Heart left ventricle (tissue), 16 donors: ENCODE measurements at regions of chr10 and their contacts with region 1.

Region 1: DNA sequence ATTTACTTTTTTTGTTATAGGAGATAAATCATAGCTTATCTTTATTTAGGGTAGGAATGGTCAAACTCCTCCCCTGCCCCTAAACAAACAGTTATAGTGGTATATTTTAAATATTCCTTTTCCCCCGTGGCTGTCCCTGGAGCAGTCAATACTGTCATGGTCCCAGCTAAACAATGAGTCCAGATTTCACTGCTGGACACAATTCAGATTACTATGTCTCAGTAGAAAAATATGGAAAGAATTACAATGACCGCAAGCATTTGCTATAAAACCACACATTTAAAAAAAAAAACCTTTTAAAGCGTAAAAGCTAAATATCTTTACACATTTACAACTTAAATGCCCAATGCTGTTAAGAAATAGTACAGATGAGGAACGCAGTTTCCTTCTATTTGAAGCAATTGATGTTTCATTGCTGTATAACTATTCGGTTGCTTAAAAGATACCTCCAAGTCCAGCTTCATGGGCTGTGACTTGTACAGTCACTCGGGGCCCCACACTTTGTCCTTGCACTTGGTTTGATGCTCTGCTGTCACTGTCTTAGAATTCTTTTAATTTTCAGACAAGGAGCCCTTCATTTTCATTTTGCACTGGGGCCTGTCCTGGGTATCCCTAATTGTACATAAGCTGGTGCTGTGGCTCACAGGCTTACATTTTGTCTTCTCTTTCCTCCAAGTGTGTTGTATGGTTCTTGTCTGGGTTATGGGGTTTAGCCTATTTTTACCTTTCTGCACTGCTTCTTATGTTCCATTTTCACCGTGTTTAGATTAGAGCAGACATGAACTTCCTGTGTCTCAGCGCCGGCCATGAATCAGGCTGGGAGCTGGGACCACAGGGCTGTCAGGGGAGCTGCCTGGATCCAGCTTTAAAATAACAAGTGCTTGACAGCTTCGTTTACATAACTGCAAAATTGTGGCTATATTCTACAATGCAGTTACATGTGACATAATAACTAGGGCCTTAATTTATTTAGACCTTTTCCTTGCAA is 530.2 kb upstream of the FZD8 start:
- DNase-seq: peak in 3 of 5 donors; percentile 26 to 61 (median 52)
- ATAC-seq: peak in 2 of 4 donors; percentile 64 to 89
- H3K4me3 ChIP-seq: no peak overlapping the region
- H3K27ac ChIP-seq: peak overlapping the region in 10 of 12 donors; percentile 2 to 55 (median 30)
- H3K4me1 ChIP-seq: peaks cover 0 to 31% (median 16%) of the 10 kb centered on the region in 12 donors
- H3K27me3 ChIP-seq: no peaks in the 10 kb centered on the region
- CTCF ChIP-seq: no peak
- POLR2A ChIP-seq: no peak

Region 2: GRCh38 chr10:35940141-35941041 is 231.9 kb before region 1 on chr10:
- intact Hi-C with region 1: loop called in 1 of 10 experiments (anchors 10 kb)
- DNase-seq: peak in 1 of 5 donors; percentile 28
- ATAC-seq: peak; percentile 58 to 84 (median 72)
- H3K4me3 ChIP-seq: no peak overlapping the region
- H3K27ac ChIP-seq: peak overlapping the region in 10 of 12 donors; percentile 3 to 71 (median 50)
- H3K4me1 ChIP-seq: peaks cover 0 to 16% (median 2%) of the 10 kb centered on the region in 12 donors
- H3K27me3 ChIP-seq: no peaks in the 10 kb centered on the region
- CTCF ChIP-seq: no peak
- POLR2A ChIP-seq: no peak

Region 3: DNA sequence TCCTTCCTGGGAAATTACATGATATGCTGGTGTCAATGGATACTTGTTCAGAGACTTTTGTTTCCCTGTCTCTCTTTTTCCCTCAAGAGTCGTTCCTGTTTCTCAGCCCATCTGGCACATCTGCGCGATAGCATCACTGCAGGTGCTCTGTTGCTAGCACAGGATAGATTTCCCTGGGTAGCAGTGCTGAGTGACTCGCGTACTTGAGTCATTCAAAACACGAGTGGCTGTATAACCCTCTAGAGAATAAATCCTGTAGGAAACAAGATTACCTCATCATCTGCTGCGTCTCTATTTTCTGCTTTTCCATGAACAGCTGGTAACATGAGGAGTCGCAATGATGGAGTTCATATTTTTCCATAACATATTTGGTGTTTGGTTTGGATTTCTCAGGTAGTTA is 78.2 kb before region 1 on chr10:
- intact Hi-C with region 1: loop called in 1 of 10 experiments (anchors 10 kb)
- DNase-seq: peak in 1 of 5 donors; percentile 19
- ATAC-seq: peak in 2 of 4 donors; percentile 71 to 86
- H3K4me3 ChIP-seq: no peak overlapping the region
- H3K27ac ChIP-seq: no peak overlapping the region
- H3K4me1 ChIP-seq: peaks cover 0 to 15% (median 6%) of the 10 kb centered on the region in 12 donors
- H3K27me3 ChIP-seq: no peaks in the 10 kb centered on the region
- CTCF ChIP-seq: no peak
- POLR2A ChIP-seq: no peak

Region 4: GRCh38 chr10:36116731-36117130 is 55.5 kb before region 1 on chr10:
- intact Hi-C with region 1: no loop called
- DNase-seq: no peak
- ATAC-seq: no peak
- H3K4me3 ChIP-seq: no peak overlapping the region
- H3K27ac ChIP-seq: peak overlapping the region in 4 of 12 donors; percentile 22 to 53 (median 30)
- H3K4me1 ChIP-seq: peaks cover 0 to 54% (median 16%) of the 10 kb centered on the region in 12 donors
- H3K27me3 ChIP-seq: no peaks in the 10 kb centered on the region
- CTCF ChIP-seq: peak in 1 of 12 donors; percentile 6
- POLR2A ChIP-seq: no peak

Region 5: DNA sequence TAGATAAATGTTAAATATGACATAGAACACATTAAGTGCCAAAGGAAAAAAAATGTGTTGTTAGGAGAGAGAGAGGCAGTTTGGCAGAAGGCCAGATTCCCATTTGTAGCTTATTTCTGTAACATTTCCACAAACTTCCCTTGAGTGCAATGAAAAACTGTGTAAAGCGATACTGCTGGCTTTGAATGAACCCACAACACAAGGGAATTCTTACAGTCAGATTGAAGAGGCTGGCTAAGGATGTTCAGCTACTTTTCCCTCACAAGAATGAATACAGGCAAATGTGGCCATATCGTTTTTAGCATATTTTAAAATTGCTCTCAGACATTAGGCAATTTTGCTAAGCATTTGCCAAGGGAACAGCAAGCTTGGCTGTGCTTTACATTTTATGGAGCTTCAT is 83.9 kb after region 1 on chr10:
- intact Hi-C with region 1: no loop called
- DNase-seq: peak in 1 of 5 donors; percentile 10
- ATAC-seq: peak in 1 of 4 donors; percentile 38
- H3K4me3 ChIP-seq: no peak overlapping the region
- H3K27ac ChIP-seq: no peak overlapping the region
- H3K4me1 ChIP-seq: peaks cover 0 to 19% (median 5%) of the 10 kb centered on the region in 12 donors
- H3K27me3 ChIP-seq: no peaks in the 10 kb centered on the region
- CTCF ChIP-seq: no peak
- POLR2A ChIP-seq: no peak

Region 6: GRCh38 chr10:36489611-36490228 is 317.5 kb after region 1 on chr10:
- intact Hi-C with region 1: no loop called
- DNase-seq: peak in 4 of 5 donors; percentile 44 to 65 (median 56)
- ATAC-seq: peak; percentile 59 to 83 (median 80)
- H3K4me3 ChIP-seq: no peak overlapping the region
- H3K27ac ChIP-seq: peak overlapping the region in 10 of 12 donors; percentile 5 to 69 (median 58)
- H3K4me1 ChIP-seq: peaks cover 0 to 43% (median 22%) of the 10 kb centered on the region in 12 donors
- H3K27me3 ChIP-seq: no peaks in the 10 kb centered on the region
- CTCF ChIP-seq: no peak
- POLR2A ChIP-seq: no peak